ENCODE measurements at regions of chr7 and their contacts with region 1.

Region 1: GRCh38 chr7:147990942-147991341 is 599.6 kb upstream of the C7orf33 start:
- DNase-seq: no peak
- ATAC-seq: no peak
- H3K4me3 ChIP-seq: no peak overlapping the region
- H3K4me3 Mint-ChIP-seq: no peak overlapping the region
- H3K27ac ChIP-seq: no peak overlapping the region
- H3K27ac Mint-ChIP-seq: no peak overlapping the region
- H3K4me1 ChIP-seq: no peaks in the 10 kb centered on the region
- H3K4me1 Mint-ChIP-seq: no peaks in the 10 kb centered on the region
- H3K27me3 ChIP-seq: no peaks in the 10 kb centered on the region
- H3K27me3 Mint-ChIP-seq: no peaks in the 10 kb centered on the region
- CTCF ChIP-seq: no peak

Region 2: DNA sequence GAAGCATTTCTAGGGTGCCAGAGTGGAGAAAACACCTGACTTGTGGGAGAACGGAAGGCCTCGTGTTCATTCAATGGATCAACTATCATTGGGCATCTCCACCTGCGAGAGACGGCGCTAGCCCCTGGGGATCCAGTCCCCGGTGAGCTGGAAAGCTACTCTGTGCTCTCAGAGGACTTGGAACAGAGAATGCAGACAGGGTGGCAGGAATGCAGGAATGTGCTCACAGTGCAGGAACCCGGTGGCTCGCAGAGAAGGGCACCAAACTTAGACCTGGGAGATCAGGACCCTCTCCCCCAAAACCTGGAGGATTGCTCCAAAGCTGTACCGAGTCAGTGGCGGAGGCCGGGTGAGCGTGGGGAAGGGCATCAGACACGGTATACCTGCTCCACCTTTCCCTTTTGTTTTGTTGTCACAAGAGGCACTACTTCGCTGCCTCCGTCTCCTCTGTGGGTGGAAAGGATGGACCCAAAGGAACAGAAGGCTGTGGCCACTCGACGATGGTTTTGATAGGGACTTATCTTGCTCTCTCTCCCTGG is 30.6 kb after region 1 on chr7:
- CTCF ChIA-PET with region 1: no interaction called
- POLR2A ChIA-PET with region 1: no interaction called
- intact Hi-C with region 1: loop called in 1 of 2 experiments (anchors 1 kb)
- DNase-seq: no peak
- ATAC-seq: no peak
- H3K4me3 ChIP-seq: no peak overlapping the region
- H3K4me3 Mint-ChIP-seq: no peak overlapping the region
- H3K27ac ChIP-seq: no peak overlapping the region
- H3K27ac Mint-ChIP-seq: no peak overlapping the region
- H3K4me1 ChIP-seq: no peaks in the 10 kb centered on the region
- H3K4me1 Mint-ChIP-seq: no peaks in the 10 kb centered on the region
- H3K27me3 ChIP-seq: no peaks in the 10 kb centered on the region
- H3K27me3 Mint-ChIP-seq: no peaks in the 10 kb centered on the region
- CTCF ChIP-seq: no peak

Measured in CD8-positive, alpha-beta T cell (primary cell).